Mammary epithelial cell (primary cell): ENCODE measurements at regions of chr20 and their contacts with region 1.

Region 1: GRCh38 chr20:19692685-19693119 is 65.4 kb upstream of the RIN2 start:
- DNase-seq: peak; percentile 65
- H3K4me3 ChIP-seq: peak overlapping the region in 1 of 3 experiments; percentile 26
- H3K27ac ChIP-seq: no peak overlapping the region
- H3K4me1 ChIP-seq: peaks cover 24% of the 10 kb centered on the region
- H3K27me3 ChIP-seq: no peaks in the 10 kb centered on the region
- CTCF ChIP-seq: peak; percentile 92 to 93

Region 2: DNA sequence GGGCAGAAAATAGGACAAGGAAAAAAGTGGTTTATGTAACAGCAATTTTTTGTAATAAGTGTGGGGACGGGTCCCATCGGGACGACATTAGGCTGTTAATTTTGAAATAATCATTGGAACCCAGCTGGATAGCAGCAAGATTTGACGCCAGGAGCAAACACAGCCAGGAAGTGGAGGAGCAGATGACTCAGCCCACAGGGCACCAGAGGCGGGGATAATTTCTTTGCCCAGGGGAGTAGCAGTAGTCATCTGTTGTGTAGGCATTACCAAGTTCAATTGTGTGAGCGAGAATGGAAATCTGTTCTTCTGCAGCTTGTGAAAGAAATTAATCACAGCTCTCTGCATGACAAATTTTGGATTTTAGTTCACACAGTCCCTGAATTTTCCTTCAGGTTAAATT is 42.7 kb after region 1 on chr20:
- CTCF ChIA-PET with region 1: no interaction called
- dilution Hi-C with region 1: no loop called
- in situ Hi-C with region 1: no loop called
- intact Hi-C with region 1: loop called (anchors 2 kb)
- DNase-seq: peak; percentile 95
- H3K4me3 ChIP-seq: no peak overlapping the region
- H3K27ac ChIP-seq: peak overlapping the region; percentile 90
- H3K4me1 ChIP-seq: peaks cover 26% of the 10 kb centered on the region
- H3K27me3 ChIP-seq: no peaks in the 10 kb centered on the region
- CTCF ChIP-seq: no peak

Region 3: GRCh38 chr20:19802492-19803158 is 109.9 kb after region 1 on chr20:
- CTCF ChIA-PET with region 1: no interaction called
- dilution Hi-C with region 1: no loop called
- in situ Hi-C with region 1: no loop called
- intact Hi-C with region 1: loop called (anchors 1 kb)
- DNase-seq: peak; percentile 89
- H3K4me3 ChIP-seq: no peak overlapping the region
- H3K27ac ChIP-seq: peak overlapping the region; percentile 43
- H3K4me1 ChIP-seq: peaks cover 26% of the 10 kb centered on the region
- H3K27me3 ChIP-seq: no peaks in the 10 kb centered on the region
- CTCF ChIP-seq: peak; percentile 39 to 43

Region 4: GRCh38 chr20:19995220-19995863 is 302.6 kb after region 1 on chr20:
- CTCF ChIA-PET with region 1: no interaction called
- dilution Hi-C with region 1: no loop called
- in situ Hi-C with region 1: loop called (anchors 5 to 10 kb)
- intact Hi-C with region 1: loop called (anchors 1 kb)
- DNase-seq: no peak
- H3K4me3 ChIP-seq: no peak overlapping the region
- H3K27ac ChIP-seq: peak overlapping the region; percentile 100
- H3K4me1 ChIP-seq: peaks cover 52% of the 10 kb centered on the region
- H3K27me3 ChIP-seq: no peaks in the 10 kb centered on the region
- CTCF ChIP-seq: peak; percentile 70 to 80

Region 5: DNA sequence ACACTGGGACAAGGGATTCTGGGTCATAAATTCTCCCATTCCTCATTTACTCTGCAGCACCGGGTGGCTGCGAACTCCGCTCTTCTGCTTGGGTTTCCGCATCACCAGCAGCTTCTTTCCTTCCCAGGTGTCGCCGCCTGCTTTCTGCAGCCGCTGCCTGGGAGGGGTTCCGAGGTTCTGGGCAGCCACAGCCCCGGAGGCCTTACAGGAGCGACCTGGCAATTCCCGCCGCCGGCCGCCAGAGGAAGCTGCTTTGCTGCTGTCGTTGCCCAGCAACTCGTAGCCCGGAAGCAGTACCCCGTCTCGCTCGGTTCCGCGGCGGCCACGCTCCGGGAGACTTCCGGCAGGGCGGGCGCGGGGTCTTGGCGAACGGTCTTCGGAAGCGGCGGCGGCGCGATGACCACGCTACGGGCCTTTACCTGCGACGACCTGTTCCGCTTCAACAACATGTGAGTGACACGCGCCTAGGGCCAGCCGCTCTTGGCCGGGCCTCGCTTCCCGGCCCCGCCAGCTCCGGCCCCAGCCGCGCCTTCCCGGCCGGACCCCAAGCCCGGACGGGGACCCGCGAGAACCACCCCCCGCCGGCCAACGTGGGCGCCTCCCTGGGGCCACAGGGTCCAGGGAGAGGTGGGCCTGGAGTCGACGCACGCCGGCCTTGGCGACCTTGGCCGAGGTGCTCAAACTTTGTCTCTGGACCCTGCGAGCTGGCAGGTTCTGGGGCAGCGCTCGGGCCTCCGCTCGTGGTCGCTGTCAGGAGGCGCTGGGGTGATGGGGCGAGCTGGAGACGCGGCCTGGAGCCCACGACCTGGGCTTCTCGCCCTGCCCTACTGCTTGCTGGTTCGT is 324.5 kb after region 1 on chr20 and contains the start of gene NAA20:
- CTCF ChIA-PET with region 1: interaction called, 7 read pairs
- dilution Hi-C with region 1: no loop called
- in situ Hi-C with region 1: no loop called
- intact Hi-C with region 1: loop called (anchors 2 kb)
- DNase-seq: peak; percentile 86
- H3K4me3 ChIP-seq: peak within 1 kb of the TSS; percentile 87 to 100 (median 97)
- H3K27ac ChIP-seq: peak within 1 kb of the TSS; percentile 82
- H3K4me1 ChIP-seq: peaks cover 21% of the 10 kb centered on the region
- H3K27me3 ChIP-seq: no peaks in the 10 kb centered on the region
- CTCF ChIP-seq: peak; percentile 48 to 77
- total RNA-seq, gene NAA20: 44.3 to 105 TPM

Region 6: DNA sequence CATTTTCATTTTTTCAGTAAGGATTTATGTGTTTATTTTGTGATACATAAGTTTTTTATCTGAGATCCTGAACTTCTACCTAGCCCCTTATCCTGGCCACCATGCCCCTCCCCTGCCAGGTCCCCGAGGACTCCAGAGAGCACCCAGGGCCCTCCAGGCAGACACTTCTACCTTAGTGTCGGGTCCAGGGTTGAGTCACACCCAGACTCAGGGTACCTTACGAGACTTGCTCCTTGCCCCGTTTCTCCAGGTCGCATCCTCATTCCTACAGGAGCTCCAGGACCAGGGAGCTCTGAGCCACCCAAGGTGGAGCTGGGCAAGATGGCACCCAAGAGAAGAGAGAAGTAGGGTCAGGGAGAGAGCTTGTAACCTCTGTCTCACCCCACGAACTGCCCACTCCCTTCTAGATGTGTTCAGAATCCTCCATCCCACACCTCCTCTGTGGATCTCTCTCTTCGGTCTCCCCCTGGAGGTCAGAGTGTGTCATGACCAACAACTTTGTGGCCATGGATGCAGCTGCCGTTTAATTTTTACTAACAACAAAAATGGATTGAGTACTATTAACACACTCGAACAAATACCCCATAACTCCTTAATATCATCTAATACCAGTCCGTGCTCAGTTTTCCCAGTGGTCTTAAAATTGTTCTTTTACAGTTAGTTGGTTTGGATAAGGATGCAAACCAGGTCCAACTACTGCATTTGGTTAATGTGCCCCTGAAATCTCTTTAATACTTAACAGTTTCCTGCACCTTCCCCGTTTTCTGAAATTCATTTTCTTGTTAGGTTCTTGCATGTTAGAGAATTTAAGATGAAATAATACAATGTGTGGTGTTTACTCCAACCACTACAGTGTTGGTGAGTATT is 544.6 kb after region 1 on chr20:
- CTCF ChIA-PET with region 1: no interaction called
- dilution Hi-C with region 1: no loop called
- in situ Hi-C with region 1: no loop called
- intact Hi-C with region 1: loop called (anchors 5 kb)
- DNase-seq: peak; percentile 29
- H3K4me3 ChIP-seq: no peak overlapping the region
- H3K27ac ChIP-seq: no peak overlapping the region
- H3K4me1 ChIP-seq: no peaks in the 10 kb centered on the region
- H3K27me3 ChIP-seq: peaks cover 3% of the 10 kb centered on the region
- CTCF ChIP-seq: peak; percentile 73 to 83